Mammary epithelial cell (primary cell): ENCODE measurements at regions of chr3 and their contacts with region 1.

Region 1: DNA sequence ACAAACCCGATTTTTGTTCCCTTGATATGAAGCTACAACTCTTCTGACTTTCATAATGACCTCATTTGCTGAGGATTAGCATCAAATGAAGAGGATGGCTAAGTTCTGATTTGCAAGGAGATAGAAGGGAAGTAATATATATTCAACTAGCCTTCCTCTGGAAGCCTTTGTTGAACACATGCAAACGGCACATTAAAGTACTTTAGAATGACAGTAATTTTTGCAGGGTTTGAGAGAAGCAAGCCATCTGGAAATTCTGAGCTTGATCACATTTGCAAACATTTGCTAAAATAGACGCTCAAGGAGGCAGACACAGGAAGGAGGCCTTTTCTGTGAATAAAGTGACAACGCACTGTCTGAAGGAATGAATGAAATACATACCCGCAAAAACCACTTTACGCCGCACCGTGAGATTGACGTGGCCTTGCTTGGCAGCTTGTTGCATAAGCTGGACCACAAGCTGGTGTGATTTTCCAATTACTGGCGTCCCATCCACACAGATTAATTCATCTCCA is 657.2 kb downstream of the MAGI1 start:
- DNase-seq: no peak
- H3K4me3 ChIP-seq: no peak overlapping the region
- H3K27ac ChIP-seq: no peak overlapping the region
- H3K4me1 ChIP-seq: no peaks in the 10 kb centered on the region
- H3K27me3 ChIP-seq: no peaks in the 10 kb centered on the region
- CTCF ChIP-seq: no peak

Region 2: GRCh38 chr3:65361448-65361847 is 20.1 kb before region 1 on chr3:
- CTCF ChIA-PET with region 1: interaction called, 13 read pairs
- dilution Hi-C with region 1: no loop called
- in situ Hi-C with region 1: no loop called
- intact Hi-C with region 1: no loop called
- DNase-seq: no peak
- H3K4me3 ChIP-seq: no peak overlapping the region
- H3K27ac ChIP-seq: no peak overlapping the region
- H3K4me1 ChIP-seq: no peaks in the 10 kb centered on the region
- H3K27me3 ChIP-seq: no peaks in the 10 kb centered on the region
- CTCF ChIP-seq: no peak